Activated T-helper 2 cell treated with anti-CD3 and anti-CD28 coated beads, Interferon-gamma antibody, Interleukin-2, Interleukin-4, amounts not matched to agents 10 μg/mL and 5 μg/mL and 100 μg/mL, durations not matched to agents 14 hours and 24 hours and 36 hours (primary cell): ENCODE measurements at regions of chrX and their contacts with region 1.

Region 1: GRCh38 chrX:41180194-41180908 is 95.1 kb downstream of the USP9X start:
- DNase-seq: peak; percentile 28
- H3K4me3 Mint-ChIP-seq: no peak overlapping the region
- H3K27ac Mint-ChIP-seq: peak overlapping the region; percentile 43
- H3K4me1 Mint-ChIP-seq: peaks cover 25% of the 10 kb centered on the region
- H3K27me3 Mint-ChIP-seq: no peaks in the 10 kb centered on the region

Region 2: DNA sequence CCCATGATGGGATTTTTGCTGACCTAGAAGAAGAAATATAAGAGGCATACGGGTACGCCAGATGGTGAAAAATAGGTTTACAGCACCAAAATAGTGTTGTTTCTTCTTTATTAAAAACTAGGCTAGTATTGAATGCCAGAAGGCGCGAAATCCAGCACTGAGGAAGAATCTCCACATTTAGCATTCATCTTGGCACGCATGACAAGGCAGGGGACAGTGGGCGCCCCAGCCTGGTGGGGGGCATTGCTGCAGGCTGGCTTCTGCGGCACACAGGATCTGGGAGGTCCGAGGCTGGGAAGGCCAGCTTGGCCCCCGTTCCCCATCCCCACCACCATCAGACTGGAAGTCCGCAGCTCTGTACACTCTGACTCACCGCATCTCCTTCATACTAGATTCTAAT is 77.9 kb after region 1 on chrX:
- intact Hi-C with region 1: loop called (anchors 1 kb)
- DNase-seq: no peak
- H3K4me3 Mint-ChIP-seq: no peak overlapping the region
- H3K27ac Mint-ChIP-seq: no peak overlapping the region
- H3K4me1 Mint-ChIP-seq: peaks cover 4% of the 10 kb centered on the region
- H3K27me3 Mint-ChIP-seq: no peaks in the 10 kb centered on the region